ENCODE measurements at regions of chr4 and their contacts with region 1.

Region 1: GRCh38 chr4:40056716-40057585 is at the start of gene N4BP2:
- H3K4me3 Mint-ChIP-seq: peak within 1 kb of the TSS; percentile 93
- H3K27ac Mint-ChIP-seq: peak within 1 kb of the TSS; percentile 97
- H3K4me1 Mint-ChIP-seq: peaks cover 22% of the 10 kb centered on the region
- H3K27me3 Mint-ChIP-seq: peaks cover 4% of the 10 kb centered on the region

Region 2: DNA sequence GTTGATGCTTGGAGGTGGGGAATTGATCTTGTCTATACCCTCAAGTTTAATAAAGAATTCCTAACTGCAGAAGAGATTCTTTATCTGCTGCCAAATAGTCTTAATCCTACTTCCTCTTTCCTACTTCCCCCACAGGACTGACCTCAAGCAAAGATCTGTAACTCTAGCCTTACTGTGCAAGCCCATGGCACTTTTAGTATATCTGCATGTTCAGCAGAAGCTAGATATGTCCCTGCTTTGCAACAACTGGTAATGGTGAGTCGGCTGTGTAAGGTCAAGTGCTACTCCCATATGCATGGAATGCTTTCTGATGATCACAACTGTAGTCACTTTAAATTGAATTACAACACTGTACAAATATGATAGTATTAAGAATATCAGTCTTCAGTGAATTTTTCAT is 53.0 kb before region 1 on chr4:
- intact Hi-C with region 1: loop called (anchors 5 kb)
- H3K4me3 Mint-ChIP-seq: no peak overlapping the region
- H3K27ac Mint-ChIP-seq: peak overlapping the region; percentile 65
- H3K4me1 Mint-ChIP-seq: peaks cover 6% of the 10 kb centered on the region
- H3K27me3 Mint-ChIP-seq: no peaks in the 10 kb centered on the region

Measured in dendritic cell treated with granulocyte-macrophage colony-stimulating factor and Interleukin-4, amounts not matched to agents 40 ng/mL and 50 ng/mL, for 4 days (primary cell).